ENCODE measurements at regions of chr2 and their contacts with region 1.

Region 1: GRCh38 chr2:86035883-86036668 is 69.6 kb downstream of the POLR1A start:
- DNase-seq: peak; percentile 93
- ATAC-seq: peak; percentile 71
- H3K4me3 ChIP-seq: peak overlapping the region; percentile 16 to 64 (median 36)
- H3K4me3 Mint-ChIP-seq: peak overlapping the region; percentile 87
- H3K27ac ChIP-seq: peak overlapping the region; percentile 98 to 99
- H3K27ac Mint-ChIP-seq: peak overlapping the region; percentile 100
- H3K4me1 ChIP-seq: peaks cover 54 to 63% of the 10 kb centered on the region in 2 donors
- H3K4me1 Mint-ChIP-seq: peaks cover 66% of the 10 kb centered on the region
- H3K27me3 ChIP-seq: no peaks in the 10 kb centered on the region
- H3K27me3 Mint-ChIP-seq: no peaks in the 10 kb centered on the region
- CTCF ChIP-seq: peak; percentile 63

Region 2: GRCh38 chr2:85976106-85976920 is 59.8 kb before region 1 on chr2:
- CTCF ChIA-PET with region 1: interaction called, 4 read pairs
- POLR2A ChIA-PET with region 1: no interaction called
- intact Hi-C with region 1: loop called (anchors 10 kb)
- DNase-seq: no peak
- ATAC-seq: no peak
- H3K4me3 ChIP-seq: no peak overlapping the region
- H3K4me3 Mint-ChIP-seq: no peak overlapping the region
- H3K27ac ChIP-seq: no peak overlapping the region
- H3K27ac Mint-ChIP-seq: no peak overlapping the region
- H3K4me1 ChIP-seq: peaks cover 6 to 13% of the 10 kb centered on the region in 2 donors
- H3K4me1 Mint-ChIP-seq: peaks cover 21% of the 10 kb centered on the region
- H3K27me3 ChIP-seq: no peaks in the 10 kb centered on the region
- H3K27me3 Mint-ChIP-seq: no peaks in the 10 kb centered on the region
- CTCF ChIP-seq: no peak

Region 3: DNA sequence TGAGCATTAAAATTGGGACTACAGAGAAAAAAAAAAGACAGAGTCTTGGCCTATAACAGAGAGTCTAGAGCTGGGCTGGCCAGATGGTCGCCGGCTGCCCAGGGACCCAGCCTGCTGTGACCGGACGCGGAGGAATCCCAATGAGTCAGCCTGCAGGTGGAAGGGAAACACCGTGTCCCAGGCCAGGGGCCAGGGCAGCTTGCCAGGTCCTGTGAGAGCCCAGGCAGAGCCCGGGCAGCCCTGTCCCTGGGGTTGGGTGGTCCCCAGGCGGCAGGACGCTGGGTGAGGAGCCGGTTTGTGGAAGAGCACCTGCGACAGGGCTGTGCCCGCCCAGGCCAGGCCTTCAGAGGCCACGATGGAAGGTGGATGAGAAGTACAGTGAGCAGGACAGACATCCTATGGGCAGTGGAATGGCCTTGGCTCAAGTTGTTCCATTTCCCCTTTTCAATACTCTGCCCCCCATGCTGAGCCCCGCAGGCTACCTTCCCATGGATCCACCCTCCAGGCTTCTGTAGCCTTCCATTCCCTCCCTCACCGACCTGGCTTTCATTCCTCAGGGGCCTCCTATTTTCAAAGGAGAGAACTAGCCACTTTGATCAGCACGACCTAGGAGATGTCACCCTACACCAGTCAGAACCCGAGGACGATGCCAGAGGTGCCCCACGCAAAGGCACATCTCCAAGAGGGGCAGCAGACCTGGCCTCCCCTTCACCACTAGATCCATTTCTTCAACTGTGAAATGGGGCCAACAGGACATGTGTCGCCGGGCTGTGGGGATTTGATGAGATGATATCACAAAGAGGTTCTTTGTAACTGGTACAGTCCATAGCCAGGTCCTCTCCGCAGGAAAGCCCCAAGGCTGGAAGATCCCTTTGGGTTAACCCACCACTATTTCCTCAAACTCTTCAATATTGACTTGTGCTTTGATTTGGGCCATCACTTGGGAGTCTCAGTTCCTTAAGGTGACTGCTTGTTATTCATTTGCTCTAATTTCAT is 17.9 kb before region 1 on chr2:
- CTCF ChIA-PET with region 1: interaction called, 8 read pairs
- POLR2A ChIA-PET with region 1: interaction called, 10 read pairs
- intact Hi-C with region 1: loop called (anchors 1 kb)
- DNase-seq: peak; percentile 37
- ATAC-seq: no peak
- H3K4me3 ChIP-seq: no peak overlapping the region
- H3K4me3 Mint-ChIP-seq: peak overlapping the region; percentile 29
- H3K27ac ChIP-seq: peak overlapping the region; percentile 80 to 87
- H3K27ac Mint-ChIP-seq: peak overlapping the region; percentile 92
- H3K4me1 ChIP-seq: peaks cover 49 to 53% of the 10 kb centered on the region in 2 donors
- H3K4me1 Mint-ChIP-seq: peaks cover 69% of the 10 kb centered on the region
- H3K27me3 ChIP-seq: no peaks in the 10 kb centered on the region
- H3K27me3 Mint-ChIP-seq: no peaks in the 10 kb centered on the region
- CTCF ChIP-seq: no peak

Region 4: DNA sequence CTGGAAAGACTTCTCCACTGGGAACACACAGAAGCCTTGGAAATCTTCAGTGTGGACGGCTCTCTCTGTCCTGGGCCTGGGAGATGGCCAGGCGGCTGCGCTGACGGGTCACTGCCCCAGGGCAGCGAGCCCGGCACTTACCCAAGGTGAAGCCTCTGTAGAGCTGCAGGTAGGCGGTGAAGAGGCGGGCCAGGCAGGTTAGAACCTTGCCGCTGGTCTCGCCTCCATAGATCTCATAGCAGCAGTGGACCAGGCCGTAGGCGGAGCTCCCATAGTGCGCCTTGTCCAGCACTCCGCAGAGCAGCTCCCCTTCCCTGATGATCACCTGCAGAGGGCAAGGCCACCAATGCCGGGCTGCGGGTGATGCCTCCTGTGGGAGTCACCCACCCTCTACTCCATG is 16.6 kb after region 1 on chr2:
- CTCF ChIA-PET with region 1: no interaction called
- POLR2A ChIA-PET with region 1: no interaction called
- intact Hi-C with region 1: no loop called
- DNase-seq: no peak
- ATAC-seq: no peak
- H3K4me3 ChIP-seq: no peak overlapping the region
- H3K4me3 Mint-ChIP-seq: no peak overlapping the region
- H3K27ac ChIP-seq: no peak overlapping the region
- H3K27ac Mint-ChIP-seq: no peak overlapping the region
- H3K4me1 ChIP-seq: no peaks in the 10 kb centered on the region
- H3K4me1 Mint-ChIP-seq: no peaks in the 10 kb centered on the region
- H3K27me3 ChIP-seq: no peaks in the 10 kb centered on the region
- H3K27me3 Mint-ChIP-seq: no peaks in the 10 kb centered on the region
- CTCF ChIP-seq: no peak

Region 5: DNA sequence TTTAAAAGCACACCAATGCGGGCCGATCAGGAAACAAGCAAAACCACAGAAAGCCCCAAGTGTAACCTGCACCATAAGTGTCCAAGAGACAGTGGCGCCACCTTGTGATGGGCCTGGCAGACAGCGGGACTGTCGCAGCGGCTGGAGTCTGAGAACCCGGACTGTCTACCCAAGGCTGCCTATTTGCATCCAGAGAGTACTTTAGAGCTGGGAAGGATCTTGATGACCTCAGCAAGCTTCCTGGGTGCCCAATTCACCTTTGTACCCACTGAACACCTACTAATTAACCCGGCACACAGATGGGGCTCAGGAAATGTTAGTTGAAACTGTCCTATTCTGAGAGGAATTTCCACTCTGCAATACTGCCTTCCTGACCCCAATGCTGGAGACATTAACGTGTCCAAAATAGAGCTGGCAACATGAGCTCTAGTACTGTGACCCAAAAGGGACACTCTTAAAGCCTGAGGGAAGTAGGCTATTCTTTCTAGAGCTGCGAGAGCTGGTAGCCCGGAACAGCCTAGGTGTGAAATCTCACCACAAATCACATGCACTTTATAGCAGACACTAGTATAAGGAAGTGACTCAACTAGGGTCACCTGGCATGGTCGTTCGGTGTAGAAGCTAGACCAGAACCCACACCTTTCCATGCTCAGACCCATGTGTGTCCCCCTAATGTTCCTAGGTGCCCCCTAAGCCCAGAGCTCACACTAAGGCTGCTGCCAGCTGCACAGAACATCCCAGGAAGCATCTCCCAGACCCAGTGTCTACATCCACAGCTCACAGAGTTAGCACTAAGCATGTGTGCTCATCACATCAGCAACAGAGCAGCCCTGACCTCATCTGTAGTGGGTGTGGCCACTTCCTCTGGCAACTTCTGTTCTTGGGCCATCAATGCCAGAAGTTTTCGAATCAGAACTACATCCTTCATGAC is 44.2 kb after region 1 on chr2:
- CTCF ChIA-PET with region 1: interaction called, 108 read pairs
- POLR2A ChIA-PET with region 1: interaction called, 4 read pairs
- intact Hi-C with region 1: loop called (anchors 1 kb)
- DNase-seq: peak; percentile 88
- ATAC-seq: peak; percentile 76
- H3K4me3 ChIP-seq: no peak overlapping the region
- H3K4me3 Mint-ChIP-seq: peak overlapping the region; percentile 66
- H3K27ac ChIP-seq: peak overlapping the region; percentile 83 to 88
- H3K27ac Mint-ChIP-seq: peak overlapping the region; percentile 94
- H3K4me1 ChIP-seq: peaks cover 22 to 35% of the 10 kb centered on the region in 2 donors
- H3K4me1 Mint-ChIP-seq: peaks cover 37% of the 10 kb centered on the region
- H3K27me3 ChIP-seq: no peaks in the 10 kb centered on the region
- H3K27me3 Mint-ChIP-seq: no peaks in the 10 kb centered on the region
- CTCF ChIP-seq: peak; percentile 78

Region 6: DNA sequence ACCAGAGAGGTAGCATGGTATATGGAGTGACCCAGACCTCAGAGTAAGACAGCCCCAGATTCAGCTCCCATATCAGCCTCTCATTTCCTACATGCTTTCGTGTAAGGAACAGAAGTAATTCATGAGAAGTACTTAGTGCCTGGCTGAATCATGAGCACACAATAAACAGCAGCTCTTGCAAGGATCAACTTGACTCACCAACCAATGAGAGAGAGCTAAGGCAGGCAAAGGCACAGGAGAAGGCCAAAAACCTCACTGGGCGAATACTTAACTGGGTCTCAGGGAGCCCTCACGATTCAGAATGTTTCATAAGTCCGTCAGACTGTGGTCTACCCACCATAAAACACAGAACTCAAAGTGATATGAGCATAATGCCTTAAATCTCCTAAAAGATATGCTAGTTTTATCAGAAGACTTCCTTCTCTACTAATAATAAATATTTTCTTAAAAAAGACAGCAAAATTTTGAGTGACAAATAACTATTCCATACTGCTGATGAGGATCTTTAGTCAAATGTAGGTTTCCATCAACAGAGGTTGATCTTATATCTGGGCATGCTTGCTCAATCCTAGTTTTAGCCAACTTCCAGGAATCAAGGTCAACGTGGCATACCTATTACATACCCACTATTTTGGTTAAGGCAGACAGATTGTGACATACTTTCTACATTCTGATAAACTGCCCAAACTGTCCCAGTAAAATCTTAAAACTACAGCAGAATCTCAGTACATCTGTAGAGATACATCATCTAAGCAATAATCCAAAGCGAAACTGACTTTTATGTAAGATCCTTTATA is 124.3 kb after region 1 on chr2:
- CTCF ChIA-PET with region 1: no interaction called
- POLR2A ChIA-PET with region 1: no interaction called
- intact Hi-C with region 1: no loop called
- DNase-seq: no peak
- ATAC-seq: no peak
- H3K4me3 ChIP-seq: no peak overlapping the region
- H3K4me3 Mint-ChIP-seq: no peak overlapping the region
- H3K27ac ChIP-seq: no peak overlapping the region
- H3K27ac Mint-ChIP-seq: no peak overlapping the region
- H3K4me1 ChIP-seq: no peaks in the 10 kb centered on the region
- H3K4me1 Mint-ChIP-seq: no peaks in the 10 kb centered on the region
- H3K27me3 ChIP-seq: no peaks in the 10 kb centered on the region
- H3K27me3 Mint-ChIP-seq: no peaks in the 10 kb centered on the region
- CTCF ChIP-seq: no peak